ENCODE measurements at regions of chr21 and their contacts with region 1.

Region 1: GRCh38 chr21:26170471-26171257 is at the start of gene APP:
- DNase-seq: peak; percentile 93
- ATAC-seq: peak; percentile 76
- H3K4me3 Mint-ChIP-seq: peak within 1 kb of the TSS; percentile 90
- H3K27ac Mint-ChIP-seq: peak within 1 kb of the TSS; percentile 83
- H3K4me1 Mint-ChIP-seq: peaks cover 22% of the 10 kb centered on the region
- H3K27me3 Mint-ChIP-seq: peaks cover 3% of the 10 kb centered on the region
- total RNA-seq, gene APP: 59.8 to 71.1 TPM

Region 2: DNA sequence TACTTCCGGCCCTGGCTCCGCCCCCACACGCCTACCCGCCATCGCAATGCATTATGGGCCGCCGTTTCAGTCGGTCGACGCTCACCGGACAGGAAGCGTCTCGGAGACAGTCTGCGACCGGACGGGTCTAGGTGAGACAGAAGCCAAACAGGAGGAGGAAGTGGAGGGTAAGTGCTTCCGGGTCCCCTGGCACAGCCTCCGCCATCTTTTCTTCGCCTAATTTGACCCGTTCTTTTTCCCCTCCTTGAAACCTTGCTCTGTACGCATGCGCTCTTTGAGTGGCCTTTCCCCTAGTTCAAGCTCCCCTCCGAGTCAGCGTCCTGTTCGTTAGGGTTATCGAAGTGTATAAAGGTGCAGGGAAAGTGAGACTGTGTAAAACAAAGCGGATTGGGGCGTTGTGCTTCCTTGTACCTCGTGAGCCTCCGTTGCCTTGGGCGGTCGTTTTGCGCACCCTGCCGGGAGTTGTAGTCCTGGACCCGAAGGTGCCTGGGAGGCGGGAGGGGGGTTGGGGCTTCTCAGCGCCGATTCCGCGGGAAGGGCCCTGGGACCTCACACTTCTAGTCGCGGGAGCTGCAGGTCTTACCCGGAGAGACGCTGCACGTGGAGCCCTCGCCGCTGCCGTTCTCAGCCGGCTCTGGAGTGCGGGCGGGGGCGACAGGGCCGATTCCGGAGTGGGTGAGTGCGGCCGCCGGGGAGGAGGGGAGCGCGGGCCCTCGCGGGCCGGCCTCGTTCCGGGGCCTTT is 435.6 kb before region 1 on chr21 and contains the starts of genes ATP5PF and GABPA:
- CTCF ChIA-PET with region 1: no interaction called
- POLR2A ChIA-PET with region 1: no interaction called
- intact Hi-C with region 1: loop called (anchors 1 to 10 kb)
- DNase-seq: peak; percentile 99
- ATAC-seq: peak; percentile 94
- H3K4me3 Mint-ChIP-seq: peak within 1 kb of the TSS; percentile 98
- H3K27ac Mint-ChIP-seq: peak within 1 kb of the TSS; percentile 100
- H3K4me1 Mint-ChIP-seq: peaks cover 48% of the 10 kb centered on the region
- H3K27me3 Mint-ChIP-seq: no peaks in the 10 kb centered on the region
- total RNA-seq, gene ATP5PF: 154 to 165 TPM
- total RNA-seq, gene GABPA: 18.7 to 25.3 TPM

Region 3: DNA sequence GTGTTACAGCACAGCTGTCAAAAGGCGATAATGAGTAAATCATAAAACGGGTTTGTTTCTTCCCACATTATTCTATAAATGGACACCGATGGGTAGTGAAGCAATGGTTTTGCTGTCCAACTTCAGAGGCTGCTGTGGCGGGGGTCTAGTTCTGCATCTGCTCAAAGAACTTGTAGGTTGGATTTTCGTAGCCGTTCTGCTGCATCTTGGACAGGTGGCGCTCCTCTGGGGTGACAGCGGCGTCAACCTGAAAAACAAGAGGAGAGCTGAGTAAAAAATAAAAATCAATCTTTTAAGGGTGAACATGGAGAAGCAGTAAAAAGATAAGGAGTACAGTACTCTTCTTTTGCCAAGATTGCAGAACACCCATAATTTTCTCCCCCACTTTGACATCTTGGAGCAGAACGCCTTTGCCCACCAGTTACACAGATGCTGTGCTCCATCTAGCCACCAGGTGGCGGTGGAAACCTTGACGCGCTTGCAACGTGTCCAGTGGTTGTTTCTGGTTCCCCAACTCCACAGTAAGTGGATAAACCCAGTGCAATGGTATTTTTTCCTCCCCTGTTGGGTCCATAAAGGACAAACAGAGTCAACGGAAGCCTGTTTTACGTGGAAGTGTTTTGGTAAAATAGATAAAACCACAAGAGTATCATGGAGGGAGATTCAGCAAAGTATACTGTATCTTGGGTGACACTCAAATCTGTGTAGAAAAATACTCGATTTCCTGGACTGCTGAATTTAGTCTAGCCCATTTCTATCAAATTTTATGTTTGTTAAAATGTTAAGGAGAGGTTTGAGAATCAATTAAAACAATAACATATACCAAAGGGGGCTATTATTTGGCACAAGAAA is 288.9 kb before region 1 on chr21:
- CTCF ChIA-PET with region 1: interaction called, 4 read pairs
- POLR2A ChIA-PET with region 1: no interaction called
- intact Hi-C with region 1: loop called (anchors 1 kb)
- DNase-seq: peak; percentile 74
- ATAC-seq: peak; percentile 83
- H3K4me3 Mint-ChIP-seq: no peak overlapping the region
- H3K27ac Mint-ChIP-seq: no peak overlapping the region
- H3K4me1 Mint-ChIP-seq: no peaks in the 10 kb centered on the region
- H3K27me3 Mint-ChIP-seq: no peaks in the 10 kb centered on the region

Region 4: GRCh38 chr21:25895565-25896205 is 275.0 kb before region 1 on chr21:
- CTCF ChIA-PET with region 1: interaction called, 6 read pairs
- POLR2A ChIA-PET with region 1: no interaction called
- intact Hi-C with region 1: loop called (anchors 1 to 2 kb)
- DNase-seq: peak; percentile 34
- ATAC-seq: peak; percentile 61
- H3K4me3 Mint-ChIP-seq: no peak overlapping the region
- H3K27ac Mint-ChIP-seq: no peak overlapping the region
- H3K4me1 Mint-ChIP-seq: peaks cover 10% of the 10 kb centered on the region
- H3K27me3 Mint-ChIP-seq: no peaks in the 10 kb centered on the region

Region 5: GRCh38 chr21:26070822-26071425 is 99.7 kb before region 1 on chr21:
- CTCF ChIA-PET with region 1: interaction called, 5 read pairs
- POLR2A ChIA-PET with region 1: no interaction called
- intact Hi-C with region 1: loop called in 1 of 2 experiments (anchors 5 kb)
- DNase-seq: peak; percentile 48
- ATAC-seq: peak; percentile 70
- H3K4me3 Mint-ChIP-seq: peak overlapping the region; percentile 56
- H3K27ac Mint-ChIP-seq: peak overlapping the region; percentile 66
- H3K4me1 Mint-ChIP-seq: peaks cover 55% of the 10 kb centered on the region
- H3K27me3 Mint-ChIP-seq: no peaks in the 10 kb centered on the region

Region 6: DNA sequence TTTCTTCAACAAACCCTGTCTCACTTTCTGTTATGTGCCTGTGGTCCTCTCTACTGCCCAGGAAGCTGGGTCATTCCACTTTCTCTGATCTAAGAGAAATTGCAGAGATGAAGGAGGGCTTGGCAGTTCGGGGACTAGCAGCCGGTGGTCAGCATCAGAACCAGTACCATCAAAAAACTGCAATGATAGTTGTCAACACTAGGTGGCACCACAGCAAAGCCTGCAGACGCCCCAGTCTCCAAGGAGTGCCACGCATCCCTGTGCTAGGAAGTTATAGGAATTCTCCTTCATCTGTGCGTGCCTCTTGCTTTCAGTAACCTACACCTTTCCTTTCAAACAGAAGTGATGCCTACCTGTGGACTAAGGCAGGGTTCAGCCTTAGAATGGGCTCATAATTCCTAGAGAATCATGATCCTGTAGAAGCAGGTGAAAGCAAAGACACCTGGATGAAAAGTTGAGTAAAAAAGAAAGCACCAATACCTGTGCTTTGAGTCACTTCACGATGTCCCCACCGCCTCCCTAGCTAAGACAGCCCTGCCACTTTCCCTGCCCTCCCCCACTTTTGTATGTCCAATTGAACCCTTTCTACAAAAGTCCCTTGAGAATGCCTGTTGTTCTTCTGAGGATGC is 545.3 kb after region 1 on chr21:
- CTCF ChIA-PET with region 1: no interaction called
- POLR2A ChIA-PET with region 1: no interaction called
- intact Hi-C with region 1: loop called in 1 of 2 experiments (anchors 5 kb)
- DNase-seq: peak; percentile 41
- ATAC-seq: no peak
- H3K4me3 Mint-ChIP-seq: no peak overlapping the region
- H3K27ac Mint-ChIP-seq: no peak overlapping the region
- H3K4me1 Mint-ChIP-seq: peaks cover 3% of the 10 kb centered on the region
- H3K27me3 Mint-ChIP-seq: peaks cover 10% of the 10 kb centered on the region

Measured in activated CD4-positive, alpha-beta T cell treated with anti-CD3 and anti-CD28 coated beads for 36 hours (primary cell).